ENCODE measurements at regions of chr1 and their contacts with region 1.

Region 1: DNA sequence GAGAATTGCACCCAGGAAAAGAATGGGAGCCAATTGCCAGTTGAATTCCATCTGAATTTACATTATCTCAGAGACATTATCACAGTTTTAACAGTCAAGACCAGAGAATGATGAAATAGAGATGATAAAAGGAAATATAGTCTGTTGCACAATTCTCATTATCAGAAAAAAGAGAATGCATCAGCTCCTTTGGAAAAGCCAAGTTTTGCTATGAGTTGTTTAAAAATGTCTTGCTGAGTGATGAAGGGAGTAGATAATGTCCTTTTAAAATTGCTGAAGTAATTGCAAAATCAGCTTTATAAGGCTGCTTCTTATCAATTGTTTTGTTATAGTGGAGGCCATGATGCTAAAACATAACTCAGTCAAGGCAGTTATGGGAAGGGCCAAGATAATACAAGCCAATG is 37.9 kb upstream of the EEIG2 start:
- DNase-seq: no peak
- CTCF ChIP-seq: no peak

Region 2: DNA sequence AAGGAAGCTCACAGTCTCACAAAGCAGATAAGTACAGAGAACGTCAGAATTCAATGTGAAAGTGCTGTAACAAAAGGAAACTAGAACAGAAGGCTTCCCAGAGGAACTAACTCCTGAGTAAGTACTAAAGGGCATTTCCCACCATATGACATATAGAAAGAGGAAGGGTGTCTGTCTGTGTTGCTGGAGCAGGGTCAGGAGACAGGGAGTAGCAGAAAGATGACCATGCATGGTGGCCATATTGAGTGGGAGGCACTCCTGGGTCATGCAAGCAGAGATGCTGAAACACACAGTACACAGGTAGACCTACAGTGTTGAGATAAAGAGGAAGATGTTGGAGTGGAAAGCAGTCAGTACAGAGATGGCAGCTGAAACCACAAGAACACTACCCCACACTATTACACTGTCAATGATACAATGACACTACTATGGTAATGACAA is 369.2 kb before region 1 on chr1:
- CTCF ChIA-PET with region 1: no interaction called
- POLR2A ChIA-PET with region 1: no interaction called
- DNase-seq: no peak
- CTCF ChIP-seq: no peak

Region 3: DNA sequence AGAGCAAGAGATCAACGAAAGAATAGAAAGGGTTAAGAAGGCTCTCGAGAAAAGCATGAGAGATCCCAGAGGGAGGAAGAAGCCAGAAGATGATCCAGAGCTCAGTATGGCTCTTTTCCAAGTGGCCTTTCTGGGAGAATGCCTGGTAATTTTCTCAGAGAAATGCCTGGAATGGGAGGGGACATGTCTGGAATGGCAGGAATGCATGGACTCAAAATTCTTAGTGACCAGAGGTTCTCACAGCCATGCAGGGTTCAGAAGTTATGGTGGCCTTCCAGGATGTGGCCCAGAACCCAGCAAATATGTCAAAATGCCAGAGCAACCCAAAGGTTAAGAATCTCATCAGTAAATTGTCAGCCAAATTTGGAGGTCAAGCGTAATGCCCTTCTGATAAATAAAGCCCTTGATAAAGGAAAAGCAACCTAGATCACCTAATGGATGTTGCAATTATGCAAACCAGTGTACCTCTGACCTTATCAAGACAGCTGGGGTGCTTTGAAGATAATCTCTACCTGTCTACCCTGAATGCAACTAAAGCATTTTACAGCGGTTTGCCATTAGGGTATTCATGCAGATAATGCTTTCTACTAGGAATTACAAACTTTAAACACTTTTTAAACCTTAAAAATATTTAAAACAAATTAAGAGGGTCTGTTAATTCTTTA is 18.8 kb before region 1 on chr1:
- CTCF ChIA-PET with region 1: no interaction called
- POLR2A ChIA-PET with region 1: no interaction called
- DNase-seq: no peak
- CTCF ChIP-seq: no peak

Region 4: GRCh38 chr1:108533351-108534083 is 11.5 kb after region 1 on chr1:
- CTCF ChIA-PET with region 1: interaction called, 13 read pairs
- POLR2A ChIA-PET with region 1: no interaction called
- DNase-seq: peak; percentile 43
- CTCF ChIP-seq: no peak

Measured in GM10248 (cell line).